Calu3 (cell line): ENCODE measurements at regions of chr12 and their contacts with region 1.

Region 1: DNA sequence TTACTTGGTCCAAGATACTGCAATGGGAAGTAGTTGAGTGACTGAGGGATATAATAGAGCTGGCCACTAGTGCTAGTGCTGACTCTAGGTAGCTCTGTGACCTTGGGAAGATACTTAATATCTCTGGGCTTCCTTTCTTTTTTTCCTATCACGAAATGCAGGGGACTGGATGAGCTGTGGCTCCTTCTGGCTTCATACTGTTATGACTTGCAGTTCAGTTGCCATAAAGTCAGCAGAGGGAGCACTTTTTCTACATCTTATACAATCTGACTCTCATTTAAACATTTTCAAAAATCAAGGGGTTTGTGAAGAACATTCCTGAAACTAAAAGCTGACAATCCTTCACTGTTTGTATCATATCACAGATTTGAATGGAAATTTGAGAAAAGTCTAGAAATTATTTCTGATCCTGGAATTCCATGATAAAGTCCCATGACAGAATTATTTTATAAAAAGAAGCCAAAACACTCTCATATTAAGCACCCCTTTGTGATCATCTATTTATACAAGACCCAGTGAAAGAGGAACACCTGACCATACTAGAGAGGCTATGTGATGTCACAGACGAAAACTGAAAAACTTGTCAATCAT is 5.4 kb downstream of the BHLHE41 start:
- DNase-seq: peak; percentile 31
- H3K4me3 Mint-ChIP-seq: no peak overlapping the region
- H3K27ac Mint-ChIP-seq: no peak overlapping the region
- H3K4me1 Mint-ChIP-seq: peaks cover 34% of the 10 kb centered on the region
- H3K27me3 Mint-ChIP-seq: no peaks in the 10 kb centered on the region
- CTCF ChIP-seq: peak; percentile 35

Region 2: GRCh38 chr12:26239122-26239851 is 119.8 kb after region 1 on chr12:
- CTCF ChIA-PET with region 1: interaction called, 8 read pairs
- intact Hi-C with region 1: loop called (anchors 1 kb)
- DNase-seq: peak; percentile 92
- H3K4me3 Mint-ChIP-seq: peak overlapping the region; percentile 24
- H3K27ac Mint-ChIP-seq: peak overlapping the region; percentile 92
- H3K4me1 Mint-ChIP-seq: peaks cover 59% of the 10 kb centered on the region
- H3K27me3 Mint-ChIP-seq: no peaks in the 10 kb centered on the region
- CTCF ChIP-seq: no peak

Region 3: DNA sequence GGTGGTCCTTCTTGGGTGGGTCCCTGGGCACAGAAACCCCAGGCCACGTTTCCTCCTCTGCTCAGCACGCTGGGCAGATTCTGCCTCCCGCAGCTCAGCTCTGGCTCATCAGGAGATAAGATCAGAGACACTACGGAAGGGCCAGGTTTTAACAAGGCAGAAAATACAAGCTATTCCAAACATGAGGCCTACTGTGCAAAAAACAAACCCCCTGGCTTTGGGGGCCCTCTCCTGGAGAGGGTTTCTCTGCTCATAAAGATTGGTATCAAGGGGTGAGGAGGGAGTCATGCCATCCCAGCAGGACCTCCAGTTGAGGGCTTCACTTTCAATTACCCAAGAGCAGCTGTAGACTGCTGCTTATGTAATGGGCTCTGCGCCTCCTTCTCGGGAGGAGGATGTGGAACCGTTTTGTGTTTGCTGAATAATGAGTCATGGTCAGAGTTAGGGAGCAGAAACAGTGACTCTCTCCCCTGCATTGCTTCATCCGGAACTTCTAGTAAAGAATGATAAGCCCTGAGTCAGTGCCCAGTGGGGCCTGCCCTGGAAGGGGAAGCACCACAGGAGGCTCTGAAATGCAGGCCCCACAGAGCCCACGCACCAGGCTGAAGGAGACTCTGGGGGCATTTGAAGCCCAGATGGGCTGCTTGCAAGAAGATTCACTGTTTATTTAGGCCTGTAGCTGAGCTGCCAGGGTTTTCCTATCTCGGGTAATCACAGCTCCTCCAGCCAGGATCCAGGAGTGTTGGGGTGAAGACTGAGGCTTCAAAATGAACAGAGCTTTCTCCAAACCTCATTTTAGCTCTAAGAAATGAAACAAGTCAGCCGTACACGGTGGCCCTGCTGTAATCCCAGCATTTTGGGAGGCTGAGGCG is 155.2 kb after region 1 on chr12:
- CTCF ChIA-PET with region 1: interaction called, 26 read pairs
- intact Hi-C with region 1: loop called (anchors 1 kb)
- DNase-seq: peak; percentile 84
- H3K4me3 Mint-ChIP-seq: peak overlapping the region; percentile 28
- H3K27ac Mint-ChIP-seq: peak overlapping the region; percentile 96
- H3K4me1 Mint-ChIP-seq: peaks cover 51% of the 10 kb centered on the region
- H3K27me3 Mint-ChIP-seq: no peaks in the 10 kb centered on the region
- CTCF ChIP-seq: no peak

Region 4: DNA sequence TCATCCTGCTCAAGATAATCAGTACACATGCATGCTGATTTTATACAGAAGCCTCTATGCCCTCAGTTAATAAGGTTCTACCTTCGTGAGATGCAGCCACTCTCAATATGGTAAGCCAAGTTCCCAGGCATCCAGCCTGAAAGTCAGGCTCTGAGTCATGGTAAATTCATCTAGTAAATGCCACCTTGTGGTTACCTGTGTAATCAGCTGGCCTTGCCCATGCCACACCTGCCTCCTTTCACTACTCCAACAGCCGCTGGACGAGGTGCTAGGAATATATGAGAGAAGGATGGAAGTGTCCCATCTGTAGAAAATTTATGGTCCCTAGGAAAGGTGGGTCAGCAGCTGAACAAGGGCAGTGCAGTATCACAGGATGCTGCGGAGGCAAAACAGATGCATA is 283.2 kb after region 1 on chr12:
- CTCF ChIA-PET with region 1: interaction called, 6 read pairs
- intact Hi-C with region 1: loop called (anchors 1 kb)
- DNase-seq: peak; percentile 71
- H3K4me3 Mint-ChIP-seq: no peak overlapping the region
- H3K27ac Mint-ChIP-seq: no peak overlapping the region
- H3K4me1 Mint-ChIP-seq: no peaks in the 10 kb centered on the region
- H3K27me3 Mint-ChIP-seq: no peaks in the 10 kb centered on the region
- CTCF ChIP-seq: peak; percentile 48

Region 5: GRCh38 chr12:26614020-26614616 is 494.6 kb after region 1 on chr12:
- CTCF ChIA-PET with region 1: interaction called, 12 read pairs
- intact Hi-C with region 1: loop called (anchors 1 kb)
- DNase-seq: peak; percentile 35
- H3K4me3 Mint-ChIP-seq: no peak overlapping the region
- H3K27ac Mint-ChIP-seq: no peak overlapping the region
- H3K4me1 Mint-ChIP-seq: no peaks in the 10 kb centered on the region
- H3K27me3 Mint-ChIP-seq: no peaks in the 10 kb centered on the region
- CTCF ChIP-seq: peak; percentile 52

Region 6: GRCh38 chr12:26651566-26652188 is 532.2 kb after region 1 on chr12:
- CTCF ChIA-PET with region 1: interaction called, 4 read pairs
- intact Hi-C with region 1: loop called (anchors 1 kb)
- DNase-seq: peak; percentile 74
- H3K4me3 Mint-ChIP-seq: no peak overlapping the region
- H3K27ac Mint-ChIP-seq: no peak overlapping the region
- H3K4me1 Mint-ChIP-seq: peaks cover 27% of the 10 kb centered on the region
- H3K27me3 Mint-ChIP-seq: no peaks in the 10 kb centered on the region
- CTCF ChIP-seq: peak; percentile 85

Region 7: DNA sequence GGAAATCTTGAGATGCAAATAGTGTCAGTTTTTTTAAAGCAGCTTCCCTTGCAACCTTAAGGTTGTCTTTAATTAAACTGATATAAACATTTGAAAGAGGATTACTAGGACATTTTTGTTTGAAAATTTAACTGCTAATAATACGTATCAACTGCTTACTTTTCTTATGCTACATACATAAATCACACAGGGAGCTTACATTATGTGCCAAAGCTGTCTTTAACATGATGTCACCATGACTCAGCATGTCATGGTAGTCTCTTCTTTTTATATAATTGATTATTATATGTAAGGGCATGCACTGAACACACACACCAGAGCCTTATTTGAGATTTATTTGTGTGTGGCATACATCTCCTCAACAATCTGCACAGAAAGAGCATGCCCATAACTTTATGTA is 1916.0 kb after region 1 on chr12:
- CTCF ChIA-PET with region 1: interaction called, 12 read pairs
- intact Hi-C with region 1: no loop called
- DNase-seq: no peak
- H3K4me3 Mint-ChIP-seq: no peak overlapping the region
- H3K27ac Mint-ChIP-seq: no peak overlapping the region
- H3K4me1 Mint-ChIP-seq: no peaks in the 10 kb centered on the region
- H3K27me3 Mint-ChIP-seq: no peaks in the 10 kb centered on the region
- CTCF ChIP-seq: no peak